ENCODE measurements at regions of chr16 and their contacts with region 1.

Region 1: DNA sequence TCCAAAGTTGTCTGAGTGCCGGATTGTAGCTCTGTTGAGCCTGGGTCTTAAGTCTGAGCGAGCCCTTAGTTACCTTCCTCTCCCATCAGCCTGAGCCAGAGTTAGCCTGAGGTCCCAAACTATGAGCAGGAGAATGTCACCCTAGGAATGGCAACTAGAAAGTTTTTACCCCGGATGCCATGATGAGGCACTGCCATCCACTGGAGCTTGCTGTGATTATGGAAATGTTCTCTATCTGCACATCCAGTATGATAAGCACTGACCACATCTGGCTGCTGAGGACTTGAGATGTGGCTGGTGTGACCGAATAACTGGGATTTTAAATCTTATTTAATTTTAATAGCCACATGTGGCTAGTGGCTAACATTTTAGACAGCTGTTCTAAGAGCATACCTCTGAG is 550.0 kb downstream of the CDH13 start:
- DNase-seq: peak in 1 of 10 donors; percentile 24

Region 2: GRCh38 chr16:83130039-83130438 is 46.8 kb before region 1 on chr16:
- intact Hi-C with region 1: no loop called
- DNase-seq: no peak

Region 3: GRCh38 chr16:83160287-83161020 is 16.3 kb before region 1 on chr16:
- intact Hi-C with region 1: loop called (anchors 1 kb)
- DNase-seq: no peak

Measured in posterior cingulate gyrus (tissue), 11 donors.